K562 (cell line): ENCODE measurements at regions of chr16 and their contacts with region 1.

Region 1: DNA sequence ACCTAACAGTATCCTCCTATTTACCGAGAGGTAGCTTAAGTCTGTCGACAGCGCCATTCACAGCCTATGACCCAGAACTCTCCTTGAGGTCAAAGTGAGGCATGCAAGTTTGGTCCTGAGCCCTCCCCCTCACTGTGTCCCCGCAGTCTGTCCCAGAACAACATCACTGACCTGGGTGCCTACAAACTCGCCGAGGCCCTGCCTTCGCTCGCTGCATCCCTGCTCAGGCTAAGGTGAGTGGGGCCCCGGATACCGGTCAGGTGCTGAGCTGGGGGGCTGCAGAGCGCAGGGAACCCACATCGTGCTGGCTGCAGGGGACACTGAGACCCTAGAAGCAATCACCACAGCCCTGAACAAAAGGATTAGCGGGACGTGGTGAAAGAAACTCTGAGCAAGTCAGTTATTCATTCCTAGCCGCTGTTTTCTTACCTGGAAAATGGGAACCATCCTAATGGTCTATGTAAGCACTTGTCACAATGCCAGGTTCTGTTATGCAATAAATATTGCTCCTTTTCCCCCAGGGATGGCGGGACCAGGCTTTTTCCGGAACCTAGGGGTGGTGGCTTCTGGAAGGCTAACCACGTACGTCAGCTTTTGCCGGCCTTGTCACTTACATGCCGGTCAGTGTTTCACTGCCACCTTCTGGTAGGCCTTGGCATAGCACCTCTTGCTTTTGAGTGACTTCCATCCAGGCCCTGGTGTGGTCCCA is 23.8 kb downstream of the DEXI start:
- DNase-seq: peak; percentile 80 to 93 (median 82)
- ATAC-seq: peak; percentile 97
- H3K4me3 ChIP-seq: no peak overlapping the region
- H3K27ac ChIP-seq: no peak overlapping the region
- H3K4me1 ChIP-seq: peaks cover 3 to 10% of the 10 kb centered on the region in 2 experiments; a peak in 2 of 5 replicates
- H3K27me3 ChIP-seq: peaks cover 6 to 17% of the 10 kb centered on the region in 2 experiments; a peak in 4 of 5 replicates
- CTCF ChIP-seq: peak; percentile 89 to 98 (median 95)
- EP300 ChIP-seq: no peak
- POLR2A ChIP-seq: no peak
- RAD21 ChIP-seq: peak; percentile 75 to 92

Region 2: GRCh38 chr16:10521681-10522274 is 396.7 kb before region 1 on chr16:
- CTCF ChIA-PET with region 1: interaction called, 10 read pairs
- POLR2A ChIA-PET with region 1: interaction called, 5 read pairs
- in situ Hi-C with region 1: loop called (anchors 5 kb)
- intact Hi-C with region 1: no loop called
- DNase-seq: peak; percentile 62 to 80 (median 70)
- ATAC-seq: peak; percentile 88
- H3K4me3 ChIP-seq: no peak overlapping the region
- H3K27ac ChIP-seq: no peak overlapping the region
- H3K4me1 ChIP-seq: no peaks in the 10 kb centered on the region
- H3K27me3 ChIP-seq: peaks cover 6 to 8% of the 10 kb centered on the region in 2 experiments; a peak in 4 of 5 replicates
- CTCF ChIP-seq: peak; percentile 86 to 93 (median 90)
- EP300 ChIP-seq: no peak
- POLR2A ChIP-seq: no peak
- RAD21 ChIP-seq: peak; percentile 51 to 84

Region 3: GRCh38 chr16:10678655-10679054 is 239.8 kb before region 1 on chr16:
- CTCF ChIA-PET with region 1: no interaction called
- POLR2A ChIA-PET with region 1: no interaction called
- in situ Hi-C with region 1: loop called (anchors 10 kb)
- intact Hi-C with region 1: no loop called
- DNase-seq: no peak
- ATAC-seq: no peak
- H3K4me3 ChIP-seq: no peak overlapping the region
- H3K27ac ChIP-seq: no peak overlapping the region
- H3K4me1 ChIP-seq: no peaks in the 10 kb centered on the region
- H3K27me3 ChIP-seq: peaks cover 51 to 62% of the 10 kb centered on the region in 2 experiments
- CTCF ChIP-seq: no peak
- EP300 ChIP-seq: no peak
- POLR2A ChIP-seq: no peak
- RAD21 ChIP-seq: no peak

Region 4: GRCh38 chr16:10812312-10813098 is 105.9 kb before region 1 on chr16:
- CTCF ChIA-PET with region 1: no interaction called
- POLR2A ChIA-PET with region 1: no interaction called
- in situ Hi-C with region 1: no loop called
- intact Hi-C with region 1: no loop called
- DNase-seq: no peak
- ATAC-seq: no peak
- H3K4me3 ChIP-seq: no peak overlapping the region
- H3K27ac ChIP-seq: no peak overlapping the region
- H3K4me1 ChIP-seq: no peaks in the 10 kb centered on the region
- H3K27me3 ChIP-seq: peaks cover 0 to 42% of the 10 kb centered on the region in 2 experiments; a peak in 4 of 5 replicates
- CTCF ChIP-seq: no peak
- EP300 ChIP-seq: no peak
- POLR2A ChIP-seq: no peak
- RAD21 ChIP-seq: no peak